ENCODE measurements at regions of chr3 and their contacts with region 1.

Region 1: GRCh38 chr3:127697551-127698240 is 24.9 kb downstream of the ABTB1 start:
- DNase-seq: peak; percentile 78
- H3K4me3 Mint-ChIP-seq: no peak overlapping the region
- H3K27ac Mint-ChIP-seq: peak overlapping the region; percentile 55
- H3K4me1 Mint-ChIP-seq: peaks cover 10% of the 10 kb centered on the region
- H3K27me3 Mint-ChIP-seq: no peaks in the 10 kb centered on the region
- CTCF ChIP-seq: no peak

Region 2: DNA sequence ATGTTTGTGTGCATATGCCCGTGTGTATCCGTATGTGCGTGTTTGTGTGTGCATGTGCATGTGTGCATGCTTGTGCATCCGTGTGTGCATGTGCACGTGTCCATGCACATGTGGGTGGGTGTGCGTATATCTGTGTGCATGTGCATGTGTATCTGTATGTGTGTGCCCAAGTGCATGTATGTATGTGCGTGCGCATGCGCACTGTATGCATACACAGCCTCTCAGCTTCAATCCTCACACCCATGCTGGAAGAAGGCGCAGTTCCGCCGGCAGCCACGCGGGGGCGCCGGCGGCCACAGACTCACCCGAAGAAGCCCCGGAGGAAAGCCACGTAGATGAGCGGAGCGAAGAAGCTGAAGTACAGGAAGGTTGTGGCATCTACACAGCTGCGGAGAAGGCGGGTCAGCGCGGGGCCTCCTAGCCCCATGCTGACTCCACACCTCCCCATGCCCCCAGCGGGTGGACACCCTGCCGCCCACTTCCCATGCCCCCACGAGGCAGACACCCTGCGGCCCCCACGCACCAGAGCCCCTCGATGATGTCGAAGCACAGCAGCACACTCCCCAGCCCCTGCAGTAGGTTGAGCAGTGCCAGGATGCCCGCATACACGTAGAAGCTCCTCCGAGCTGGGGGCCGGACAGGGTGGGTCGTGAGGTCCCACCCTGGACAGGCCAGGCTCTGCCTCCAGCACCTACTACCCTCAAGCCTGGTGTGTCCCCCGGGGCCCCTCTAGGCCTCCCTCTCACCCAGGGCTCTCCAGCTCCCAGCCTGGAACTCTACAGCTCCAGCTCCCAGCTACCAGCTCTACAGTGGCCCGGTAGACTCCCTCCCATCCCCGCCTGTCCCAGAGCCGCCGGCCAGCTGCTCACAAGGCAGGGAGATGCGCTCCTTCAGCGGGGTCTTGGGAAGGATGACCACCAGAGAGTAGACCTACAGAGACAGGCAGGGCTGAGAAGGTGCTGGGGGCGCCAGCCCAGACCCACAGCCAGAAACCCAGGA is 122.5 kb before region 1 on chr3:
- CTCF ChIA-PET with region 1: interaction called, 12 read pairs
- POLR2A ChIA-PET with region 1: interaction called, 3 read pairs
- intact Hi-C with region 1: loop called (anchors 5 kb)
- DNase-seq: peak; percentile 91
- H3K4me3 Mint-ChIP-seq: no peak overlapping the region
- H3K27ac Mint-ChIP-seq: peak overlapping the region; percentile 23
- H3K4me1 Mint-ChIP-seq: peaks cover 6% of the 10 kb centered on the region
- H3K27me3 Mint-ChIP-seq: no peaks in the 10 kb centered on the region
- CTCF ChIP-seq: peak; percentile 96

Region 3: GRCh38 chr3:127684871-127685707 is 12.6 kb before region 1 on chr3:
- CTCF ChIA-PET with region 1: interaction called, 5 read pairs
- POLR2A ChIA-PET with region 1: interaction called, 12 read pairs
- intact Hi-C with region 1: no loop called
- DNase-seq: no peak
- H3K4me3 Mint-ChIP-seq: no peak overlapping the region
- H3K27ac Mint-ChIP-seq: no peak overlapping the region
- H3K4me1 Mint-ChIP-seq: peaks cover 8% of the 10 kb centered on the region
- H3K27me3 Mint-ChIP-seq: no peaks in the 10 kb centered on the region
- CTCF ChIP-seq: no peak

Region 4: GRCh38 chr3:127822698-127823425 is 125.2 kb after region 1 on chr3:
- CTCF ChIA-PET with region 1: interaction called, 4 read pairs
- POLR2A ChIA-PET with region 1: no interaction called
- intact Hi-C with region 1: loop called (anchors 2 kb)
- DNase-seq: no peak
- H3K4me3 Mint-ChIP-seq: peak overlapping the region; percentile 90
- H3K27ac Mint-ChIP-seq: no peak overlapping the region
- H3K4me1 Mint-ChIP-seq: peaks cover 29% of the 10 kb centered on the region
- H3K27me3 Mint-ChIP-seq: no peaks in the 10 kb centered on the region
- CTCF ChIP-seq: no peak